ENCODE measurements at regions of chr1 and their contacts with region 1.

Region 1: DNA sequence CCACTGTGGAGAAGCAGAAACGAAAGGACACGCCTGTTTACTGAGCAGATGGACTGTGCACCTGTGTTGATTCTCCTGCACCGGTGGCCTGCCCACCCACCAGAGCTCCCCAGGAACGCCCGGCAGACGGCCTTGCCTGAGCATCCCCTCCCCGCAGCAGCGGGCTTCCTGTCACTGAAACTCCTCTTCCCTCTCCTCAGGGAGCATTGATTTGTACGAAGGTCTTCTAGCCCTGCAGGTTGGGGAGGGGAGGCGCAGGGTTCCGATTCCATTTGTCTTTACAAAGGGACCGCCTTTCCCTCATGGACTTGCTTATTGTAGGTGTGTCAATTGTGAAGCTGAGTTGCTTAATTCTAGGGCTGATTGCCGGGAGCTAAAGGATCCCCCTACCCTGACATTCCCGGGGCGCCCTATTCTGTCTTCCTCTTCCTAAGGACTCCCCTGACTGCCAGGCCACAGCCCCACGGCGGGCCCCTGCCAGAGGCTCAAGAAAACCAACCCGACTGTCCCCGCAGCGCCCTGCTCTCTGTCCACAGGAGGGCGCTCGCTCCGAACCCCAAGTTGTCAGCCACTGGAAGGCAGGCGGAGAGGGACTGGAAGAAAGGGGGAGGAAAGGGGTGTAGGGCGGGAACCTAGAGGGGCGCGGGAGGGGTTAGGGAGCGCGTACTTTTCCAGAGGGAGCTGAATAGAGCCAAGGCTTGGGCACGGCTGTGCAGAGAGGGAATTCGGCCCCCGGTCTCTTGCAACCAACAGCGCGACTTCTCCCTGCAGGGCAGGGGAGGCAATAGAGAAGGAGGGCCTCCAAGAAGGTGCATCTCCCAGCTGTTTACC is 2.8 kb downstream of the S100A6 start:
- DNase-seq: peak; percentile 73
- ATAC-seq: peak; percentile 13
- H3K4me3 ChIP-seq: no peak overlapping the region
- H3K4me3 Mint-ChIP-seq: peak overlapping the region; percentile 47
- H3K27ac ChIP-seq: peak overlapping the region; percentile 2 to 26
- H3K27ac Mint-ChIP-seq: peak overlapping the region; percentile 50
- H3K4me1 ChIP-seq: peaks cover 38 to 48% of the 10 kb centered on the region in 2 donors
- H3K4me1 Mint-ChIP-seq: peaks cover 41% of the 10 kb centered on the region
- H3K27me3 ChIP-seq: no peaks in the 10 kb centered on the region
- H3K27me3 Mint-ChIP-seq: no peaks in the 10 kb centered on the region
- CTCF ChIP-seq: peak; percentile 71

Region 2: GRCh38 chr1:152968248-152968647 is 564.7 kb before region 1 on chr1:
- CTCF ChIA-PET with region 1: no interaction called
- POLR2A ChIA-PET with region 1: no interaction called
- intact Hi-C with region 1: no loop called
- DNase-seq: no peak
- ATAC-seq: no peak
- H3K4me3 ChIP-seq: no peak overlapping the region
- H3K4me3 Mint-ChIP-seq: no peak overlapping the region
- H3K27ac ChIP-seq: no peak overlapping the region
- H3K27ac Mint-ChIP-seq: no peak overlapping the region
- H3K4me1 ChIP-seq: no peaks in the 10 kb centered on the region
- H3K4me1 Mint-ChIP-seq: no peaks in the 10 kb centered on the region
- H3K27me3 ChIP-seq: peaks cover 0 to 5% (median 2%) of the 10 kb centered on the region in 4 experiments
- H3K27me3 Mint-ChIP-seq: peaks cover 36% of the 10 kb centered on the region
- CTCF ChIP-seq: no peak

Region 3: GRCh38 chr1:153566440-153567379 is 33.7 kb after region 1 on chr1:
- CTCF ChIA-PET with region 1: interaction called, 189 read pairs
- POLR2A ChIA-PET with region 1: interaction called, 8 read pairs
- intact Hi-C with region 1: loop called (anchors 1 kb)
- DNase-seq: peak; percentile 50
- ATAC-seq: peak; percentile 80
- H3K4me3 ChIP-seq: no peak overlapping the region
- H3K4me3 Mint-ChIP-seq: peak overlapping the region; percentile 55
- H3K27ac ChIP-seq: peak overlapping the region; percentile 49 to 63
- H3K27ac Mint-ChIP-seq: peak overlapping the region; percentile 85
- H3K4me1 ChIP-seq: peaks cover 12 to 28% of the 10 kb centered on the region in 2 donors
- H3K4me1 Mint-ChIP-seq: peaks cover 30% of the 10 kb centered on the region
- H3K27me3 ChIP-seq: peaks cover 0 to 2% (median 0%) of the 10 kb centered on the region in 4 experiments
- H3K27me3 Mint-ChIP-seq: peaks cover 7% of the 10 kb centered on the region
- CTCF ChIP-seq: no peak

Measured in B cell (primary cell).